PC-3 (cell line): ENCODE measurements at regions of chr4 and their contacts with region 1.

Region 1: GRCh38 chr4:85798012-85798770 is 323.2 kb downstream of the ARHGAP24 start:
- DNase-seq: no peak
- ATAC-seq: no peak
- H3K4me3 ChIP-seq: no peak overlapping the region
- H3K27ac ChIP-seq: no peak overlapping the region
- H3K4me1 ChIP-seq: peaks cover 9% of the 10 kb centered on the region; the same call in 1 of the 2 replicates
- H3K27me3 ChIP-seq: no peaks in the 10 kb centered on the region
- CTCF ChIP-seq: no peak

Region 2: DNA sequence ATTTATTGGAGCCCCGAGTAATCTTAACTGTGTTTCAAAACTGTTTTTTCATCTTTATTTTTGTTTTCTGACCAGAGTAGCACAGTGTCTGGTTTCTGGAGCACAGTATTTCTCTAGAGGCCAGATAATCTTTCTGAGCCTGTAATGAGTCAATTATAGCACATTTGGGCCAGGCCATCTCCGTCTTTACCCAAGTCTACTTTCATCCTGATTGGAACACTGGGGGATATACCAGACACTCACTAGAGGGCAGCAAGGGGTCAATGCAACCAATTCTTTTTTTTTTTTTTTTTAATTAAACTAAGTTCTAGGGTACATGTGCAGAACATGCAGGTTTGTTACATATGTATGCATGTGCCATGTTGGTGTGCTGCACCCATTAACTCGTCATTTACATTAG is 41.3 kb before region 1 on chr4:
- CTCF ChIA-PET with region 1: interaction called, 15 read pairs
- POLR2A ChIA-PET with region 1: no interaction called
- intact Hi-C with region 1: loop called (anchors 2 kb)
- DNase-seq: peak; percentile 55
- ATAC-seq: peak; percentile 54; the same call in 1 of the 2 replicates
- H3K4me3 ChIP-seq: no peak overlapping the region
- H3K27ac ChIP-seq: no peak overlapping the region
- H3K4me1 ChIP-seq: peaks cover 10% of the 10 kb centered on the region
- H3K27me3 ChIP-seq: no peaks in the 10 kb centered on the region
- CTCF ChIP-seq: peak; percentile 49

Region 3: GRCh38 chr4:85761803-85762528 is 36.2 kb before region 1 on chr4:
- CTCF ChIA-PET with region 1: interaction called, 15 read pairs
- POLR2A ChIA-PET with region 1: interaction called, 5 read pairs
- intact Hi-C with region 1: loop called (anchors 2 kb)
- DNase-seq: peak; percentile 24
- ATAC-seq: peak; percentile 72
- H3K4me3 ChIP-seq: peak overlapping the region; percentile 31; the same call in 1 of the 2 replicates
- H3K27ac ChIP-seq: peak overlapping the region; percentile 66
- H3K4me1 ChIP-seq: peaks cover 27% of the 10 kb centered on the region
- H3K27me3 ChIP-seq: no peaks in the 10 kb centered on the region
- CTCF ChIP-seq: no peak

Region 4: DNA sequence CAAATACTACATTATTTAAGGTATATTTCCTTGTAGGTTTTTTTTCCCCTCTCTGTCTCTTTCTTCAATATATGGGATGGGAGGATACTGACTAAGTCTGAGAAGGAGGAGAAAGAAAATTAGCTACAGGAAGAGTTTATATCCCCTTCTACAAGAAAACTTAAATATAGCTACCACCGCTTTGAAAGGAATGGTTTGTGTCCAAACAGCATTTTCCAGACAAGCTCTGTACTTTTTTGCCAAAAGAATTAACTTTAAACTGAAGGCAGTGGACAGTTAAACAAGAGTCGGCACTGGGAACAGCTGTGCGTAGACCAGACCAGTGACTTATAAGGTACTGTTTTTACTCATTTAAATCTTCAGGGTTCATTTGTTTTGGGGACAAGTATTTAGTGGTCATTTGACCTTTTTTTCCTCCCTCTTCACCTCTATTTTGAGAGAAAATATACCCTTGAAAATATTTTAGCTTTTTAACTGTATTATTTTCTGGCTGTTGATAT is 19.5 kb before region 1 on chr4:
- CTCF ChIA-PET with region 1: interaction called, 16 read pairs
- POLR2A ChIA-PET with region 1: no interaction called
- intact Hi-C with region 1: no loop called
- DNase-seq: peak; percentile 24
- ATAC-seq: peak; percentile 36
- H3K4me3 ChIP-seq: peak overlapping the region; percentile 71
- H3K27ac ChIP-seq: peak overlapping the region; percentile 98
- H3K4me1 ChIP-seq: peaks cover 57% of the 10 kb centered on the region
- H3K27me3 ChIP-seq: no peaks in the 10 kb centered on the region
- CTCF ChIP-seq: no peak

Region 5: GRCh38 chr4:85818700-85819099 is 20.5 kb after region 1 on chr4:
- CTCF ChIA-PET with region 1: no interaction called
- POLR2A ChIA-PET with region 1: no interaction called
- intact Hi-C with region 1: no loop called
- DNase-seq: no peak
- ATAC-seq: no peak
- H3K4me3 ChIP-seq: no peak overlapping the region
- H3K27ac ChIP-seq: no peak overlapping the region
- H3K4me1 ChIP-seq: no peaks in the 10 kb centered on the region
- H3K27me3 ChIP-seq: no peaks in the 10 kb centered on the region
- CTCF ChIP-seq: no peak

Region 6: DNA sequence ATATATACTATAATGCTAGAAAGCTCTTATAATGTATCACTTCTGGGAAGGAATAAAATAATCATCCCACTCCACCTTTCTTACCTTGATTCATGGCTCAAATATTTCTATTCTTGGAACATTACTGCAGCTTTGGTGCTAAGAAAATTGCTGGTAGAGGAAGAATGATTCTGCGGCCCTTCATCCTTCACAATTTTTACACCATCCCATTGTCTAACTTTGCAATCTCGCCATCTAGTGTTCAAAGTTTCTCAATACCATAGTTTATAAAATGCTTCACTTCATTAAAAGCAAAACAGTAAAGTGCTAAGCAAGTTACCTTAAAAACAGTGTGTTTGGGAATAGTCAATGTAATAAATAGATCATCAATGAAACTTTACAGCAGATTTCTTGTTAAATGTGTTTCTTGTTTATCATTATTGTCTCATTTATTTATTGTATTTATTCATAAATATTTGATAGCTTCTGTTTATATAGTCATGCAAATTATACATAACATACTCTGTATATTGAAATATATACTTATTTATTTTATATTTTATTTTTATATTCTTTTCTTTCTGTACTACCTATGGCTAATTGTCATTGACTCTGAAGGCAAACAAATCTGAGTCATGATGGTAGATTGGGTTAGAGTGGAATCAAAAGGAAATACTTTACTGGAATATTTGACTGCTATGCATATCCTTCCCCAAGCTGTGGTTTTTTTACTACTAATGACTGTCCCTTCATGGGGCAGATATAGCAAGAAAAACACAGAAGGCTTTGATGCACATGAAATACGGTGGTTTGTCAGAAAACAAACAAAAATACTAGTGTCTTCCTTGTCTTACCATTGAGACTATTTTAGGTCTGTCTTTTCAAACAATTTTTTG is 171.0 kb after region 1 on chr4:
- CTCF ChIA-PET with region 1: interaction called, 11 read pairs
- POLR2A ChIA-PET with region 1: no interaction called
- intact Hi-C with region 1: loop called (anchors 1 kb)
- DNase-seq: peak; percentile 81
- ATAC-seq: peak; percentile 96
- H3K4me3 ChIP-seq: no peak overlapping the region
- H3K27ac ChIP-seq: peak overlapping the region; percentile 54
- H3K4me1 ChIP-seq: peaks cover 23% of the 10 kb centered on the region
- H3K27me3 ChIP-seq: no peaks in the 10 kb centered on the region
- CTCF ChIP-seq: peak; percentile 74

Region 7: GRCh38 chr4:86043755-86044592 is 245.8 kb after region 1 on chr4:
- CTCF ChIA-PET with region 1: interaction called, 9 read pairs
- POLR2A ChIA-PET with region 1: no interaction called
- intact Hi-C with region 1: loop called (anchors 1 kb)
- DNase-seq: peak; percentile 72
- ATAC-seq: peak; percentile 76
- H3K4me3 ChIP-seq: peak overlapping the region; percentile 22; the same call in 1 of the 2 replicates
- H3K27ac ChIP-seq: no peak overlapping the region
- H3K4me1 ChIP-seq: peaks cover 11% of the 10 kb centered on the region
- H3K27me3 ChIP-seq: no peaks in the 10 kb centered on the region
- CTCF ChIP-seq: peak; percentile 71

Region 8: DNA sequence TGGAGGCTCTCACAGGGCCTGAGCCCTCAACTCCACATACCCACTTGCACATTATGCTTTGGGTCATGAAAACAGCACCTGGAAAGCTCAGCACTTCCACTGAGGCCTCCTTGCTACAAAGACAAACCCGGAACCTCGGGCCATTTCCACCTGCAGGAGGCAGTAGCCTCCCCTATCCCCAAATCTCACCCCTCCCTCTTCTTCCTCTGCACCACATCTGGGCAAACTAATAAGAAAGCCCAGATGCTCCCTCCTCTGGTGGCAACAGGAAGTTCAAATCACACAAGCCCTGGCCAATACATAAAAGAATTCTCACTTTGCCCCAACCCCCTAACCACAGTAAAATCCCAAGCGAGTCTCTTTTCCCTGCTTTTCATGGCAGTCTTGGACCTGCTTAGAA is 425.3 kb after region 1 on chr4:
- CTCF ChIA-PET with region 1: no interaction called
- POLR2A ChIA-PET with region 1: no interaction called
- intact Hi-C with region 1: loop called (anchors 2 kb)
- DNase-seq: peak; percentile 60
- ATAC-seq: peak; percentile 62
- H3K4me3 ChIP-seq: no peak overlapping the region
- H3K27ac ChIP-seq: no peak overlapping the region
- H3K4me1 ChIP-seq: peaks cover 11% of the 10 kb centered on the region
- H3K27me3 ChIP-seq: no peaks in the 10 kb centered on the region
- CTCF ChIP-seq: peak; percentile 80